ENCODE measurements at regions of chr1 and their contacts with region 1.

Region 1: DNA sequence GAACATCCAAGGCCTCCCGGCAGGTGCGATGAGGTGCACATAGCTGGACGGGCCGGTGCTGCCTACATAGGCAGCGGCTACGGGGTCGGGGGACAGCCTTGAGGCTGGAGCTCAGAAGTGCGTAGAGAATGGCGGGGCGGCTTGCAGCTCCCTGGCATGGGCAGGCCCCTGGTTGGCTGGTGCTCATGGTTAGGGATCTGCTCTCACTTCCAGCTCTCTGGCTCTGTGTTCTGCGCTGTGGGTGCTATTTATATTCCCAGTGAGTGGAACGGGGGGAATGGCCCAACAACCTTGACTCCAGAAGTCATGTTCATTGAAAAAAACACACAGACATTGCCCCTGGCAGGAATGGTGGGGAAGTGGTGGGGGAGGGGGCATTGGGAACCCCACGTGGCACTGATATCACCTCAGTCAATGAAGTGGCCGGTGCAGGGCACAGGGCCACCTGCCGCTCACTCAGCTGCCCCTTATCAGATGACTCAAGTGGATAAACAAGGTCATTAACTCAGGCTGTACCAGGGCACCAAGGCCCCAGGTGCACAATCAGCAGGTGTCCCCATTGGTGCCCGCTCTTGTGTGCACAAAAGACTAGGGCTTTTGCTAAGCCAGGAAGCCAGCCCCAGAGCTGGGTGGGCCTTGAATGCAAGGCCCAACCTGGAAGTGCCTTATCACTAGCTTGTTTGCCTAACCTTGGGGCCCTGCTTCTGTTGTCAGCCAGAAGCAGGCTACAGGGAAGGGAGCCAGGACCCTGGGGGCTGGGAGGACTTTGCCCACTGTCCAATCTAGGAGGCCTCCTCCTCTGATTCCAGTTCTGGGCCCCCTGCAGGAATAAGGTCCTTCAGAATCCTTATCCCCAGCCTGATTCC is at the start of gene NR0B2:
- DNase-seq: peak; percentile 65 to 85 (median 74)
- ATAC-seq: peak; percentile 88
- H3K4me3 ChIP-seq: no peak within 1 kb of the TSS
- H3K27ac ChIP-seq: peak within 1 kb of the TSS; percentile 69
- H3K4me1 ChIP-seq: peaks cover 28 to 31% of the 10 kb centered on the region in 2 experiments
- H3K27me3 ChIP-seq: no peaks in the 10 kb centered on the region
- CTCF ChIP-seq: no peak
- EP300 ChIP-seq: peak; percentile 55; the same call in 1 of the 2 replicates
- POLR2A ChIP-seq: no peak
- RAD21 ChIP-seq: peak in 1 of 2 experiments; percentile 8; a peak in 1 of 4 replicates
- polyA plus RNA-seq, gene NR0B2: not detected

Region 2: DNA sequence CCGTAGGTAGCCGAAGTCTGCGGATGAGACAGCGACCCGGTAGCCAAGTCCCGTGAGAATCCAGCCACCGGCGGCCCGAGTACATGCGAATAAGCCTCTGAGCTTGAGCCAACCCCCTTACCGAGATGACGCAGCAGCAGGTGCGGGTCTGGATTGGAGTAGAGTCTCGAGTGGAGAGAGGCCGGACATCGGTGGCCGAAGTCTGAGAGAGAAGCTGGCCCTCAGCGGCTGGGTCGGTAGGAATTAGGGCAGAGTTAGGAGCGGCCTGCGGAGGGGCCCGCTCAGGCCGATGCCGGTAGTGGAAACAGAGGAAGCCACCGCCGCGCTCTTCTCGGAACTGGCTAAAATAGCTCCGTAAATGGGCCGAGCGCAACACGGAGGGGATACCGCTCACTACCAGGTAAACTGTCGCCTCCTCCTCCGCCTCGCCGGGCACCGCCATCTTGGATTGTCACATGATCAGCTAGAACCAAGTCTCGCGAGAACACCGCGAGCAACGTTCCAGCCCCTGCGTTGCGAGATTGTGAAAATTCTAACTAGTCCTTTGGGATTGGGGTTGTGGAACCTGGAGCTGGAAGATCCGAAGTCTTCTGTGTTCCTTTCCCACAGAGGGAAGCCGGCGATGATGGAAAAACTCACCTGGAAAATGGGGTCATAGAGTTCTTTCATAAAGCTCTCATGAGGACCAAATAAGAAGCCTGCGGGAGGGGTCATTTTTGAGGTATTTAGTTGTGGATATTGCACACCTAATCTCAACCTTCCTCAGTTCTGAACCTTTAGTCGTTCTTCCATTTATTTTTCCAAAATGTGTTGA is 13.8 kb before region 1 on chr1 and contains the start of gene GPATCH3:
- CTCF ChIA-PET with region 1: no interaction called
- POLR2A ChIA-PET with region 1: interaction called, 32 read pairs
- in situ Hi-C with region 1: no loop called
- intact Hi-C with region 1: no loop called
- DNase-seq: peak; percentile 92 to 99 (median 94)
- ATAC-seq: peak; percentile 92
- H3K4me3 ChIP-seq: peak within 1 kb of the TSS; percentile 91
- H3K27ac ChIP-seq: peak within 1 kb of the TSS; percentile 81
- H3K4me1 ChIP-seq: peaks cover 9 to 18% of the 10 kb centered on the region in 2 experiments; a peak in 4 of 5 replicates
- H3K27me3 ChIP-seq: no peaks in the 10 kb centered on the region; a peak in 1 of 5 replicates
- CTCF ChIP-seq: no peak
- EP300 ChIP-seq: peak; percentile 2; the same call in 1 of the 2 replicates
- POLR2A ChIP-seq: peak; percentile 96
- RAD21 ChIP-seq: no peak
- polyA plus RNA-seq, gene GPATCH3: 1.6 to 4.9 TPM